Posterior cingulate gyrus (tissue), 11 donors: ENCODE measurements at regions of chr1 and their contacts with region 1.

Region 1: GRCh38 chr1:180881806-180882509 is 30.7 kb upstream of the KIAA1614 start:
- DNase-seq: peak in 1 of 10 donors; percentile 51

Region 2: GRCh38 chr1:180424848-180425457 is 457.0 kb before region 1 on chr1:
- intact Hi-C with region 1: no loop called
- DNase-seq: no peak

Region 3: DNA sequence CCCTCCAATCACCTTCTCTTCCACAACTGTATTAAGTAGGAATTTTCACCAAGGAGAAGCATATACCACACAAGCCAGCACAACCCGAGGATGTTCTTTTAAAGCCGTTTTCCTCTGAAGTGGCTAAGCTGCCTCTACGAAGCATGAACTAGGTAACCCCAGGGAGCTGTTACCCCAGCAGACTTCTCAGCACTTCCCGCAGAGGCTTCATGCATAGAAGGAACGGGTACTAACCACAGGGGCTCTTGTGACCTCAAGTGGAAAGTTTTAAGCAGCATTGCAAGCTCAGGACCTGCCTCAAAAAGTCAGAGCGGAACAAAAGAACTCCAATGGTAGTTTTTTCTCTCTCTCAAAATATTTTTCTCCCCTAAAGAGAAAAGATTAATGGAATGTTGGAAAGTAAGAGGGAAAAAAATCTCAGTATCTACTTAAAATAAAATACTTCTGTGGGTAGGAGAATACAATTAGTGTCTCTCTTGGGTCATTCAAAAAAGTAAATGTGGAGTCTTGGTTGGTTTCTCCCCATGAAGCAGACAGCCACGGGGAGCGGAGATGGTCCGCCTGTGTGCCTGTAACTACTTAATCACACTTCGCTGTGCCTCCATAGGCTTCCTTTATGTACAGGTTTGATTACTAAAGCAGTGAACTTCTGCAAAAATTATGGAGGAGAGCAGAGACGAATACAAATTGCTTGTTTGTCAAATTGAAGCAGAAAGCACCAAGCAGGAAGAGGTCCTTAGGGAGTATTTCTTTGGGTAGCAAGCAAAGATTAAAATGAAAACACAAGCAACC is 99.8 kb after region 1 on chr1:
- intact Hi-C with region 1: no loop called
- DNase-seq: no peak

Region 4: DNA sequence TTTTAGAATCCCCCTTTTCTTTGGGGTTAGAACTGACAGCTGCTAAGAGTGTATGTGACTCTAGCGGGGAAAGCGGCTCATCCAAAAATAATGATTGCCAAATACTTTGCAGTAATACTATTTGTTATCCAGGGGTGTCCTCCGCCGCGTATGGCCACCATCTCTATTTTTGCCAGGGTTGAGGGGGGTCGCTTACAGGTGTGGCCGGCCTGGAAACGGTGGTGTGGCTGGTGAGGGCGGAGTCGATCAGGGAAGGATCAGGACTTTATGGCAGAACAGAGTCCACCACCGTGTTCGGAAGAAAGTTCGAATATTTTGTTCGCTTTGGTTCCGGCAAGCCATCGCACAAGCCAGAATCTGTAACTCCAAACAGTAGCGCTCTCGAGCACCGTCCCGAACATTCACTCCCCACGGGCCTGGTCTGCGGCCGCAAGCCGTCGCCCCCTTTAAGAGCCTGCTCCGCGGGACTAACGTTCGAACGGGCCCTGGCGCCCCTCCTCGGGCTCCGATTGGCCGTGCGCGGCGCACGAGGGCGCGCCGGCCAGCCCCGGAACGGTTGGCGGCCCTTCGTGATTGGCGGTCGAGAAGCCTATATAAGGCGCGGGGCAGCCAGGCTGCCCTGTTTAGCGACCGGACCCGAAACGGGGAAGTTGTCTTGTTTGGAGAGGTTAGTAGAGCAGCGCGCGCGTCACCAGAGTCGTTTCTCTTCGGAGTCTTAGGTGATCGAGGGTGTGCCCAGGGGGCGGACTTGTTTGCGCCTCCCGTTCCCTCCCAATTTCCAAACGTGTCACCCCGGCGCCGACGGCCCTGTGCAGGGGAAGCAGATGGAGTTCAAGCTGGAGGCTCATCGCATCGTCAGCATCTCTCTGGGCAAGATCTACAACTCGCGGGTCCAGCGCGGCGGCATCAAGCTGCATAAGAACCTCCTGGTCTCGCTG is 206.4 kb after region 1 on chr1 and contains the start of gene IER5:
- intact Hi-C with region 1: loop called (anchors 1 kb)
- DNase-seq: peak; percentile 92 to 99 (median 97)

Region 5: GRCh38 chr1:181166377-181167196 is 284.6 kb after region 1 on chr1:
- intact Hi-C with region 1: loop called (anchors 5 kb)
- DNase-seq: peak in 6 of 10 donors; percentile 55 to 90 (median 68)